ENCODE measurements at regions of chr13 and their contacts with region 1.

Region 1: DNA sequence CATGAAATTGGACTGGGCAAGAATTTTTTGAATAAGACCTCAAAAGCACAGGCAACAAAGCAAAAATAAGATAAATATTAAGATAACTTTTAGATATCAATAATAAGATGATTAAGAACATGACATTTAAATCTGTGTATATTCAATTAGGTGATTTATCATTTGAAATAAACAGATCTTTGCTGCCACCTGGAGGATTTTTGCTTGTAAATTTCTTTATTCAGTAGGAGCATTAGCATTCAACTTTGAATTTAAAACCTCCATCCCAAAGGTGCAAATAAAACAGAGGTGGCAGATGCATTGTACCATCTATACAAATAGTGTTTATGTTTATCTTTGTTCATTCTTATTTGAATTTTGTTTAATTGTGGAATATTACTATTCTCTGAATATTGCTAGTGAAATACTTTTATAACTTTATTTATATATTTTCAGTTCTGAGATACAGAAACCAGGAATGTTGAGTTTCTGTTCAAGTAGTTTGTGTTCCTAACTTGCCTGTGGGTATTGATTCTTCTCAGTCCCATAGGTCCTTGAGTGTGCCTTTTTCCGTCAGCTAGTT is 20.9 kb downstream of the COG6 start:
- DNase-seq: peak in 7 of 14 experiments; percentile 4 to 72 (median 47)
- ATAC-seq: peak; percentile 60
- H3K4me3 ChIP-seq: no peak overlapping the region
- H3K4me3 Mint-ChIP-seq: no peak overlapping the region
- H3K27ac ChIP-seq: no peak overlapping the region
- H3K27ac Mint-ChIP-seq: no peak overlapping the region
- H3K4me1 ChIP-seq: no peaks in the 10 kb centered on the region
- H3K4me1 Mint-ChIP-seq: no peaks in the 10 kb centered on the region
- H3K27me3 ChIP-seq: no peaks in the 10 kb centered on the region
- H3K27me3 Mint-ChIP-seq: no peaks in the 10 kb centered on the region
- CTCF ChIP-seq: peak; percentile 62

Region 2: GRCh38 chr13:38970380-38971051 is 705.9 kb before region 1 on chr13:
- CTCF ChIA-PET with region 1: no interaction called
- POLR2A ChIA-PET with region 1: no interaction called
- intact Hi-C with region 1: loop called in 1 of 2 experiments (anchors 2 kb)
- DNase-seq: peak in 3 of 14 experiments; percentile 7 to 10 (median 9)
- ATAC-seq: no peak
- H3K4me3 ChIP-seq: no peak overlapping the region
- H3K4me3 Mint-ChIP-seq: no peak overlapping the region
- H3K27ac ChIP-seq: no peak overlapping the region
- H3K27ac Mint-ChIP-seq: no peak overlapping the region
- H3K4me1 ChIP-seq: no peaks in the 10 kb centered on the region
- H3K4me1 Mint-ChIP-seq: no peaks in the 10 kb centered on the region
- H3K27me3 ChIP-seq: peaks cover 0 to 3% of the 10 kb centered on the region in 2 experiments
- H3K27me3 Mint-ChIP-seq: peaks cover 4% of the 10 kb centered on the region
- CTCF ChIP-seq: no peak

Region 3: DNA sequence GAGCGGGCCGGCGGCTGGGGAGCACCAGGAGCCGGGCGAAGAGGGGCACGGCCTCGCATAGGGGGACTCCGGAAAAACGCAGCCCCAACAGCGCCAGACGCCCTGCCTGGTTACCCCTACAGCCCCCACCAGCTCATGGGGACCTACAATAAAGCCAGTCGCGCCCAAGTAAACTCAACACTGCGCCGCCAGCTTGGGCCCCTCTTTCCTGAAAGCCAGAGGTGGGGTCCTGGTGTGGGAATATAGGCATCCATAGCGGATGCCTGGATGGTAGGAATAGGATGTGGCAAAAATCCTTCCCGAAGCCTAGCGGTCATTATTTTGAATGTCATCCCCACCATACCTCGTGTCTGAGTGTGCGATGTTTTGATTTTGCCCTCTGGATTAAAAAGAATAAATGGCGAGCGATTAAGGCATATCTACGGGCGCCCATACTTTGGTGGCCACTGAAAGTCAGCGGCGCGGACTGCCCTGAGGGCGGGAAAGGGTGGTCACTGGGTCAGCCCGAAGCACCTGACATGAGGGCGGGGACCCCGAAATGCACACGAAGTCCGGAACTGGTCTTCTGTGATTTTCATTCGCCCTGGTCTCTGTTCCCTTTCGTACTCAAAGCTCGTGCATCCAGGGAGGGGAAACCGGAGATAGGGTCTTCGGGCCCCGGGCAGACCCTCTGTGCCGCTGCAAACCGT is 638.4 kb before region 1 on chr13 and contains the starts of genes NHLRC3 and PROSER1:
- CTCF ChIA-PET with region 1: no interaction called
- POLR2A ChIA-PET with region 1: no interaction called
- intact Hi-C with region 1: loop called in 1 of 2 experiments (anchors 5 kb)
- DNase-seq: peak; percentile 65 to 90 (median 76)
- ATAC-seq: peak; percentile 76
- H3K4me3 ChIP-seq: peak within 1 kb of the TSS; percentile 80
- H3K4me3 Mint-ChIP-seq: peak within 1 kb of the TSS; percentile 95
- H3K27ac ChIP-seq: peak within 1 kb of the TSS; percentile 64 to 76
- H3K27ac Mint-ChIP-seq: peak within 1 kb of the TSS; percentile 98
- H3K4me1 ChIP-seq: peaks cover 12% of the 10 kb centered on the region
- H3K4me1 Mint-ChIP-seq: peaks cover 89% of the 10 kb centered on the region
- H3K27me3 ChIP-seq: no peaks in the 10 kb centered on the region
- H3K27me3 Mint-ChIP-seq: no peaks in the 10 kb centered on the region
- CTCF ChIP-seq: no peak
- total RNA-seq, gene NHLRC3: 3.9 to 5.9 TPM
- total RNA-seq, gene PROSER1: 29.3 to 35.3 TPM

Region 4: GRCh38 chr13:39051157-39051556 is 625.2 kb before region 1 on chr13:
- CTCF ChIA-PET with region 1: no interaction called
- POLR2A ChIA-PET with region 1: no interaction called
- intact Hi-C with region 1: loop called in 1 of 2 experiments (anchors 5 kb)
- DNase-seq: peak in 3 of 14 experiments; percentile 40 to 53 (median 52)
- ATAC-seq: peak; percentile 48
- H3K4me3 ChIP-seq: no peak overlapping the region
- H3K4me3 Mint-ChIP-seq: no peak overlapping the region
- H3K27ac ChIP-seq: no peak overlapping the region
- H3K27ac Mint-ChIP-seq: no peak overlapping the region
- H3K4me1 ChIP-seq: no peaks in the 10 kb centered on the region
- H3K4me1 Mint-ChIP-seq: no peaks in the 10 kb centered on the region
- H3K27me3 ChIP-seq: no peaks in the 10 kb centered on the region
- H3K27me3 Mint-ChIP-seq: no peaks in the 10 kb centered on the region
- CTCF ChIP-seq: peak; percentile 50

Region 5: DNA sequence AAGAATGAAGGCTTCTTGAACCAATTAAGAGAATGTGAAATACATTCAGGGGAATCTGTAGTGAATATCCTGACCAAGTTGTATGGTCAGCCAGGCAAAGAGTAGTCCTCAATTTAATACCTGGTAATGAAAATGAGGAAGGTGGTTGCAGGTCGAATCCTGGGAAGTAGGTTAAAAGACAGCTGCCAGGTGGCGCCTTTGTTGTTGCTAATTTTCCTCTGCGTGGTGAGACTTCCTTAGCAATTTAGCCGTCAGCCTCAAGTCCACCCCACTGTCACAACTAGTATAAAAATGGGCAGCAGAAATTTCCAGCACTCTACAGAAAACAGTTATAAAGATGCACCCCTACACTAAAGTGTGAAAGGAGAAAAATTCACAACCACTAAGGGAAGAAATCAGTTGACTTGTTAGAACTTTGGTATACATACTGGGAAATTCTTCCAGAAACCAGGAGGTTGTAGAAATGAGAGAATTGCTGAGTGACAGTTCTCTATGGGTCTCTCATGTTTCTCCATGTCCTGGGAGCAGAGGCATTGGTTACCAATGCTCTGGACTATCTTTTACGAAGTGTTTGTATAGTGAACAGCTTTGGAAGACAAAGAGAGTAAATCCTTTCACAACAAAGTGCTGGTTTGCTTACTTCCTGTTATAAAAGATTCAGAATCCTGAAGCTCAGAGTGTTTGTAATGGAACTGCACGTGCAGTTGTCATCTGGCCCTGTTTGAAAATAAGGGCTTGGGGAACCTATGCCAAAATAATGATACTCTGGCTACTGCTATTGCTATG is 402.2 kb before region 1 on chr13:
- CTCF ChIA-PET with region 1: no interaction called
- POLR2A ChIA-PET with region 1: no interaction called
- intact Hi-C with region 1: loop called in 1 of 2 experiments (anchors 10 kb)
- DNase-seq: peak in 1 of 14 experiments; percentile 1
- ATAC-seq: no peak
- H3K4me3 ChIP-seq: no peak overlapping the region
- H3K4me3 Mint-ChIP-seq: no peak overlapping the region
- H3K27ac ChIP-seq: no peak overlapping the region
- H3K27ac Mint-ChIP-seq: no peak overlapping the region
- H3K4me1 ChIP-seq: no peaks in the 10 kb centered on the region
- H3K4me1 Mint-ChIP-seq: no peaks in the 10 kb centered on the region
- H3K27me3 ChIP-seq: peaks cover 0 to 5% of the 10 kb centered on the region in 2 experiments
- H3K27me3 Mint-ChIP-seq: peaks cover 19% of the 10 kb centered on the region
- CTCF ChIP-seq: no peak

Region 6: GRCh38 chr13:39616087-39616694 is 60.2 kb before region 1 on chr13:
- CTCF ChIA-PET with region 1: interaction called, 3 read pairs
- POLR2A ChIA-PET with region 1: no interaction called
- intact Hi-C with region 1: loop called (anchors 2 to 5 kb)
- DNase-seq: peak in 9 of 14 experiments; percentile 2 to 74 (median 17)
- ATAC-seq: peak; percentile 78
- H3K4me3 ChIP-seq: no peak overlapping the region
- H3K4me3 Mint-ChIP-seq: no peak overlapping the region
- H3K27ac ChIP-seq: no peak overlapping the region
- H3K27ac Mint-ChIP-seq: no peak overlapping the region
- H3K4me1 ChIP-seq: no peaks in the 10 kb centered on the region
- H3K4me1 Mint-ChIP-seq: no peaks in the 10 kb centered on the region
- H3K27me3 ChIP-seq: peaks cover 0 to 6% of the 10 kb centered on the region in 2 experiments
- H3K27me3 Mint-ChIP-seq: peaks cover 33% of the 10 kb centered on the region
- CTCF ChIP-seq: peak; percentile 85

Measured in CD4-positive, alpha-beta T cell (primary cell).